Heart left ventricle (tissue), 16 donors: ENCODE measurements at regions of chr14 and their contacts with region 1.

Region 1: DNA sequence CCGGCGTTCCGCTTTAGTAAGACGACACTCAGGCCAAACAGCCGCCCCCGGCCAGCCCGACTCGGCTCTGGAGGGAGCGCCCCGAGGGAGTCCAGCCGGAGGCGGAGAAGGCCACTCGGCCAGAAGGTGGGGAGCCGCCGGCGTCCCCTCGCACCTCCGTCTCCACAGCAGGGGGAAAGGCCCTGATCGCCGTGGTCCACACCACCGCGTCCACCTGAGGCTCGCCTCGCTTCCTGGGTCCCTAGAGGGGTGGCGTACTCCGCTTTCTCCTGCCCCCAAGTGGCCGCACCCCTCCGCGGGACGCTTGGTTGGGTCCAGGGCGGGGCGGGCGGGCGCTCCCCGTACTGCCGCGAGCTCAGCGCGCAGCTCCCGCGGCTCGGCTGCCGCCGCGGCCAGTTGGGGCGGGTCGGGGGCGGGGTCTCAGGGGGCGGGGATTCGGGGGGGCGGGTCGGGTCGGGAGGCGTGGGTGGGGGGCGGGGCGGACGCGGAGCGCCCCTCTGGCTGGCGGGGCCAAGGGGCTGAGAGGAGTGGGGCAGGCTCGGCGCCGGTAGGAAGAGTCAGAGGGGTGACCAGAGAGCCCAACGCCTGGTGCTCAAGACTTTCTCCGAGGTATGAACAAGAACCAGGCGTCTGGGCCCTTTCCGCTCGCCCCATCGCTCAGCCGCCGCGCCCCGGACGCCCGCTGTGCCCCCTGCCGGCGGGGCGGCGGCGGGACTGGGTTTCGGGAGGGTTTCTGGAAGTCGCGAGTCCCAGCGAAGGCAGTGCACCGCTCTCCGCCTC is at the start of gene FRMD6:
- DNase-seq: peak; percentile 90 to 94 (median 93)
- ATAC-seq: peak; percentile 88 to 95 (median 92)
- H3K4me3 ChIP-seq: peak within 1 kb of the TSS; percentile 60 to 96 (median 88)
- H3K27ac ChIP-seq: peak within 1 kb of the TSS; percentile 89 to 100 (median 97)
- H3K4me1 ChIP-seq: peaks cover 0 to 36% (median 12%) of the 10 kb centered on the region in 12 donors
- H3K27me3 ChIP-seq: peaks cover 0 to 6% (median 0%) of the 10 kb centered on the region in 9 donors
- CTCF ChIP-seq: peak; percentile 63 to 90 (median 76)
- POLR2A ChIP-seq: peak in 1 of 2 donors; percentile 85
- total RNA-seq, gene FRMD6: 4.0 to 23.2 (median 9.2) TPM

Region 2: GRCh38 chr14:51395361-51395849 is 256.2 kb before region 1 on chr14:
- intact Hi-C with region 1: loop called in 2 of 10 experiments (anchors 10 kb)
- DNase-seq: peak; percentile 36 to 81 (median 66)
- ATAC-seq: peak; percentile 41 to 83 (median 72)
- H3K4me3 ChIP-seq: no peak overlapping the region
- H3K27ac ChIP-seq: peak overlapping the region; percentile 56 to 91 (median 75)
- H3K4me1 ChIP-seq: peaks cover 0 to 44% (median 28%) of the 10 kb centered on the region in 12 donors
- H3K27me3 ChIP-seq: no peaks in the 10 kb centered on the region
- CTCF ChIP-seq: no peak
- POLR2A ChIP-seq: no peak

Region 3: GRCh38 chr14:51507906-51508511 is 143.6 kb before region 1 on chr14:
- intact Hi-C with region 1: loop called in 1 of 10 experiments (anchors 5 kb)
- DNase-seq: peak; percentile 60 to 81 (median 66)
- ATAC-seq: peak; percentile 66 to 82 (median 74)
- H3K4me3 ChIP-seq: no peak overlapping the region
- H3K27ac ChIP-seq: peak overlapping the region in 11 of 12 donors; percentile 3 to 77 (median 42)
- H3K4me1 ChIP-seq: peaks cover 0 to 20% (median 12%) of the 10 kb centered on the region in 12 donors
- H3K27me3 ChIP-seq: no peaks in the 10 kb centered on the region
- CTCF ChIP-seq: no peak
- POLR2A ChIP-seq: no peak

Region 4: DNA sequence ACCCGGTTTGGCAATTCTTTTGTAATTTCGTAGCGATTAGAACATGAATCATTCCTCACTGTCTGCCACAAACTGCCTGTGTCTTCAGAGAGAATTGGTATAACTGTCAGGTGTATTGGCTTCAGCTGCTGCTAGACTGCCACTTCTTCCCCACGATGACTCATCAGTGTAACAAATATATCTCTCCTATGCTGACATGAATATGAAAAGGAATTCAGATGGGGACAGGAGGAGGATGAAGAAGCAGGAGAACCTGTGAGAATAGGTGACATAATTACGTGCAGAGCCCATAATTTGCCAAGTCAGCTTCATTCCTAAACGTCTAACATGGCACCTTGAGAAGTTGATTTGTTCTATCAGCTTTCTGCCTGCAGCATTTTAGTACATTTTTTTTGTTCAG is 65.0 kb after region 1 on chr14:
- intact Hi-C with region 1: no loop called
- DNase-seq: no peak
- ATAC-seq: peak in 2 of 4 donors; percentile 33 to 38
- H3K4me3 ChIP-seq: no peak overlapping the region
- H3K27ac ChIP-seq: no peak overlapping the region
- H3K4me1 ChIP-seq: no peaks in the 10 kb centered on the region
- H3K27me3 ChIP-seq: no peaks in the 10 kb centered on the region
- CTCF ChIP-seq: no peak
- POLR2A ChIP-seq: no peak

Region 5: GRCh38 chr14:51780006-51780692 is 128.6 kb after region 1 on chr14:
- intact Hi-C with region 1: loop called in 7 of 10 experiments (anchors 5 to 10 kb)
- DNase-seq: peak; percentile 54 to 73 (median 68)
- ATAC-seq: peak; percentile 23 to 74 (median 72)
- H3K4me3 ChIP-seq: no peak overlapping the region
- H3K27ac ChIP-seq: no peak overlapping the region
- H3K4me1 ChIP-seq: peaks cover 0 to 22% (median 5%) of the 10 kb centered on the region in 12 donors
- H3K27me3 ChIP-seq: peaks cover 0 to 5% (median 0%) of the 10 kb centered on the region in 9 donors
- CTCF ChIP-seq: peak; percentile 73 to 91 (median 84)
- POLR2A ChIP-seq: no peak

Region 6: GRCh38 chr14:51989293-51990234 is 338.0 kb after region 1 on chr14 and contains the start of gene RTRAF:
- intact Hi-C with region 1: loop called in 2 of 10 experiments (anchors 5 kb)
- DNase-seq: peak; percentile 96 to 97 (median 96)
- ATAC-seq: peak; percentile 97 to 100 (median 99)
- H3K4me3 ChIP-seq: peak within 1 kb of the TSS; percentile 58 to 98 (median 88)
- H3K27ac ChIP-seq: peak within 1 kb of the TSS; percentile 60 to 93 (median 86)
- H3K4me1 ChIP-seq: peaks cover 0 to 51% (median 27%) of the 10 kb centered on the region in 12 donors
- H3K27me3 ChIP-seq: no peaks in the 10 kb centered on the region
- CTCF ChIP-seq: peak in 1 of 12 donors; percentile 16
- POLR2A ChIP-seq: peak; percentile 49 to 90
- total RNA-seq, gene RTRAF: 72.9 to 260 (median 193) TPM